Naive thymus-derived CD4-positive, alpha-beta T cell (primary cell): ENCODE measurements at regions of chr3 and their contacts with region 1.

Region 1: DNA sequence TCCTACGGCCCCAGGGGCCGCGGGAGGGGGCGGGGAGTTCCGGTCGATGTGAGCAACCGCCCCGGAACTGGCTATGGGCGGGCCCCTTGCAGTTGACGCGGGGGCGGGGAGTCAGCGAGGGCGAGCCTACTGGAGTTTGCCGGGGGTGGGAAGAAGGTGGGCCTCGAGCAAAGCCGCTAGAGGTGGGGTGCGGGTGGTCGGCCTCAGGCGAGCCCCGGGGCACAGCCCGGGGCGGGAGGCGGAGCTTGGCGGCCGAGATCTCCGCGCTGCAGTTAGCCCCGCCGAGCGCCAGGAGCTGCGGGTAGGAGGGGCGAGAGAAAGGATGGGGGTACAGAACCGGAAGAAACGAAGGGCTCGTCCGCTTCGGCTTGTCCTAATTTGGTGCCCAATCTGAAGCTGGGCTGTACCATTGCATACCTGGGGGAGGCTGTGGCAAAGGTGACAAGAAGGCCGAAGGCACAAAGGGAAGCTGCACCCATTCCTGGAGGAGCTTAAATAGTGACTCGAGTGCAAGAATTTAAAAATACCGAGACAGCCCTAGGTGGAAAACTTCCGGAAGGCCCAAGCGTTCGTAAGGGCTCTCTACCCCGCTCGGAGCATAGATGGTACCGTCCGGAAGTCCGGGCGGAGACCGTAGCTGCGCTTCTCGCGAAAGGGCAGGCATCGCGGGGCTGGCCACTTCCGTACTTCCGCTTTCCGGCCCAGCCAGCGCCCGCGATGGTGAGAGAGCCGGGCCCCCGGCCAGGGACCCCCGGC is at the starts of genes ARPC4 and TADA3:
- DNase-seq: peak; percentile 83 to 96 (median 93)
- ATAC-seq: peak; percentile 92
- H3K4me3 ChIP-seq: peak within 1 kb of the TSS; percentile 81
- H3K4me3 Mint-ChIP-seq: peak within 1 kb of the TSS; percentile 90 to 100 (median 98)
- H3K27ac ChIP-seq: peak within 1 kb of the TSS; percentile 98
- H3K27ac Mint-ChIP-seq: peak within 1 kb of the TSS; percentile 97 to 100 (median 99)
- H3K4me1 ChIP-seq: peaks cover 47% of the 10 kb centered on the region in 2 donors
- H3K4me1 Mint-ChIP-seq: peaks cover 45 to 75% (median 63%) of the 10 kb centered on the region in 7 donors
- H3K27me3 ChIP-seq: no peaks in the 10 kb centered on the region
- H3K27me3 Mint-ChIP-seq: no peaks in the 10 kb centered on the region
- total RNA-seq, gene ARPC4: 128 to 273 (median 129) TPM
- total RNA-seq, gene TADA3: 31.6 to 67.4 (median 36.8) TPM

Region 2: GRCh38 chr3:9749645-9750555 is 42.7 kb before region 1 on chr3 and contains the start of gene OGG1:
- CTCF ChIA-PET with region 1: no interaction called
- POLR2A ChIA-PET with region 1: interaction called, 25 read pairs
- intact Hi-C with region 1: loop called (anchors 1 kb)
- DNase-seq: peak; percentile 77 to 95 (median 94)
- ATAC-seq: peak; percentile 97
- H3K4me3 ChIP-seq: peak within 1 kb of the TSS; percentile 84
- H3K4me3 Mint-ChIP-seq: peak within 1 kb of the TSS; percentile 93 to 98 (median 96)
- H3K27ac ChIP-seq: peak within 1 kb of the TSS; percentile 73
- H3K27ac Mint-ChIP-seq: peak within 1 kb of the TSS; percentile 86 to 96 (median 93)
- H3K4me1 ChIP-seq: peaks cover 13 to 22% of the 10 kb centered on the region in 2 donors
- H3K4me1 Mint-ChIP-seq: peaks cover 30 to 58% (median 47%) of the 10 kb centered on the region in 7 donors
- H3K27me3 ChIP-seq: no peaks in the 10 kb centered on the region
- H3K27me3 Mint-ChIP-seq: no peaks in the 10 kb centered on the region
- total RNA-seq, gene OGG1: 18.8 to 42.9 (median 31.6) TPM

Region 3: DNA sequence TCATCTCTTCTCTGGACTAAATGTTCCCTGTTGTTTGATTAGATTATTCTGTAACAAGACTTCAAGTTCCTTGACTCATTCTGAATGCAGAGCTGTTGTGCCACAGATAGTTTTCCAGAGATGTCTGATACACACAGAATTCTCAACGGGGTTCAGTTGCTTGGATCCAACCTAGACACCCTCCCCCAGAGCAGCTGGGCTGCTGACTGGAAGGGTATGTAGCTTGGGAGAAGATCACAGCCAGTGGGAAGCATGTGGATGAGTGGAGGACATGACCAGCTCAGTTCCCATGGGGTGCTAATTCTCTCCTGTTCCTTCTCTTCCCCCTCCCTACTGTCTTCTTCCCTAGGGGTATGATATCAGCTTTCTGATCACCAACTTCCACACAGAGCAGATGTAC is 10.9 kb after region 1 on chr3:
- CTCF ChIA-PET with region 1: interaction called, 7 read pairs
- POLR2A ChIA-PET with region 1: interaction called, 61 read pairs
- intact Hi-C with region 1: no loop called
- DNase-seq: no peak
- ATAC-seq: no peak
- H3K4me3 ChIP-seq: no peak overlapping the region
- H3K4me3 Mint-ChIP-seq: no peak overlapping the region
- H3K27ac ChIP-seq: peak overlapping the region; percentile 14
- H3K27ac Mint-ChIP-seq: peak overlapping the region in 6 of 9 donors; percentile 8 to 42 (median 32)
- H3K4me1 ChIP-seq: peaks cover 3 to 10% of the 10 kb centered on the region in 2 donors
- H3K4me1 Mint-ChIP-seq: peaks cover 15 to 27% (median 21%) of the 10 kb centered on the region in 7 donors
- H3K27me3 ChIP-seq: no peaks in the 10 kb centered on the region
- H3K27me3 Mint-ChIP-seq: no peaks in the 10 kb centered on the region

Region 4: DNA sequence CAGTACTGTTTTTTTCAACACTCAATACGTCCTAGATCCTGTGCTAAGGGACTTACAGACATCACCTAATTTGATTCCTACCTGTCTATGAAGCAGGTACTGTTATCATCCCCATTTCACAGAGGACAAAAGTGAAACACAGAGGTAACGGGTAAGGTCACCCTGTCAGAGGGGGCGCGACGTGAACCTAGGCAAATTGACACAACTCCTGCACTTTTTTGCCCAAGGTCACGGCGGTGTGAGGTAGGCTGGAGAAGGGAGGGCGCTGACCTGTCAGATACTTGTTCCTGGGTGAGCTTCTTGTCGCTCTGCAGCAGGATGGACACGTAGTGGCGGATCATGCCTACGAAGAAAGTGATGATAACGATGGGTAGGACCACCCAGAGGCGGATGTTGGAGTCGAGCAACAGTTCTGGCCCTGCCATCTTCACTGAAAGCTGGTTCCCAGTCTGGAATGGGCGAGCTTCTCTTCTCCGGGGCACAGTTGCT is 193.7 kb after region 1 on chr3:
- CTCF ChIA-PET with region 1: no interaction called
- POLR2A ChIA-PET with region 1: no interaction called
- intact Hi-C with region 1: loop called (anchors 1 to 2 kb)
- DNase-seq: no peak
- ATAC-seq: peak; percentile 52
- H3K4me3 ChIP-seq: peak overlapping the region; percentile 100
- H3K4me3 Mint-ChIP-seq: peak overlapping the region; percentile 95 to 99 (median 98)
- H3K27ac ChIP-seq: peak overlapping the region; percentile 96
- H3K27ac Mint-ChIP-seq: peak overlapping the region; percentile 95 to 100 (median 98)
- H3K4me1 ChIP-seq: peaks cover 13 to 15% of the 10 kb centered on the region in 2 donors
- H3K4me1 Mint-ChIP-seq: peaks cover 0 to 48% (median 35%) of the 10 kb centered on the region in 7 donors
- H3K27me3 ChIP-seq: no peaks in the 10 kb centered on the region
- H3K27me3 Mint-ChIP-seq: no peaks in the 10 kb centered on the region

Region 5: GRCh38 chr3:10115326-10116137 is 322.9 kb after region 1 on chr3 and contains the start of gene BRK1:
- CTCF ChIA-PET with region 1: no interaction called
- POLR2A ChIA-PET with region 1: no interaction called
- intact Hi-C with region 1: loop called (anchors 1 kb)
- DNase-seq: peak; percentile 73 to 94 (median 91)
- ATAC-seq: peak; percentile 99
- H3K4me3 ChIP-seq: peak within 1 kb of the TSS; percentile 83
- H3K4me3 Mint-ChIP-seq: peak within 1 kb of the TSS; percentile 91 to 100 (median 98)
- H3K27ac ChIP-seq: peak within 1 kb of the TSS; percentile 85
- H3K27ac Mint-ChIP-seq: peak within 1 kb of the TSS; percentile 92 to 99 (median 98)
- H3K4me1 ChIP-seq: peaks cover 11 to 13% of the 10 kb centered on the region in 2 donors
- H3K4me1 Mint-ChIP-seq: peaks cover 23 to 48% (median 40%) of the 10 kb centered on the region in 7 donors
- H3K27me3 ChIP-seq: no peaks in the 10 kb centered on the region
- H3K27me3 Mint-ChIP-seq: peaks cover 0 to 2% (median 0%) of the 10 kb centered on the region in 5 donors
- total RNA-seq, gene BRK1: 40.9 to 117 (median 65.8) TPM